ENCODE measurements at regions of chr14 and their contacts with region 1.

Region 1: DNA sequence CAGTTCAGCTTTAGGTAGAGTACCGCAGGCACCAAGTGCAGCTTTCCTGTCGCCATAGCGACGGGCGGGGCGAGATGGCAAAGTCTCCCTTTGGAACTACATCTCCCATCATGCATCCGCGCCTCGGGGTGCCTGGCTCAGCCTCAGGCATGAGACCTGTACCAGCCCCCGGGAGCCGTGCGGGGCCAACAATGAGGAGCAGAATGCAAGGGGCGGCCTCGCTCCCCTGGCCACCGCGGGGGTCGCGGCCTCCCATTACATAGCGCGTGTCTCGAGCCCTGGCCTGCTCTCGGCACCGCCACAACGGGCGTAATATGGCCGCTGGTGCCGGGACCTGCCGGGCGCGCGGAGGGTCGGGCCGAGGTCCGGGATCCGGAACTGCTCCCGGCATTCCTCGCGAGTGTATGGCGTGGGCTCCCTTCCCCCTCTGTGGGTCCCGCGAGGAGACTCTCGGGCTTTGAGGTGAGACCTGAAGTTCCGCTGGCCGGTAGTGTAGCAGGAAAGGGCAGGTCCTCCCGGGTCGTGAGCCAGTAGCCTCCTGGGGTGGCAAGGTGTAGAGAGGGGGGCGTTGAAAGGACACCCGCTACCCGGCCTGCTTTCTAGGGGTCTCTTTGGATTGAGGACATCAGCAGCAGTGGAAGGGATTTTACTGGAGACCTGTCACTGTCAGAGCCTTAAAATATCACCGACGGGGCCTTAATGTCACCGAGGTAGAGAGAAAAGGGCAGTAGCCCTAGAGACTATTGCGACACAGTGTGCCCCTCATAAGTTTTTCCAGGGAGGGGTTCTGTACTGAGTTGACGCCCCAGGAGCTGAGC is at the start of gene THTPA:
- DNase-seq: peak; percentile 98
- ATAC-seq: peak; percentile 62
- H3K4me3 Mint-ChIP-seq: peak within 1 kb of the TSS; percentile 86
- H3K27ac Mint-ChIP-seq: peak within 1 kb of the TSS; percentile 82
- H3K4me1 Mint-ChIP-seq: peaks cover 41% of the 10 kb centered on the region
- H3K27me3 Mint-ChIP-seq: no peaks in the 10 kb centered on the region; the same call in 1 of the 2 replicates
- CTCF ChIP-seq: no peak
- total RNA-seq, gene THTPA: 20.0 to 26.2 TPM (median 25.4 TPM) in 3 replicates

Region 2: DNA sequence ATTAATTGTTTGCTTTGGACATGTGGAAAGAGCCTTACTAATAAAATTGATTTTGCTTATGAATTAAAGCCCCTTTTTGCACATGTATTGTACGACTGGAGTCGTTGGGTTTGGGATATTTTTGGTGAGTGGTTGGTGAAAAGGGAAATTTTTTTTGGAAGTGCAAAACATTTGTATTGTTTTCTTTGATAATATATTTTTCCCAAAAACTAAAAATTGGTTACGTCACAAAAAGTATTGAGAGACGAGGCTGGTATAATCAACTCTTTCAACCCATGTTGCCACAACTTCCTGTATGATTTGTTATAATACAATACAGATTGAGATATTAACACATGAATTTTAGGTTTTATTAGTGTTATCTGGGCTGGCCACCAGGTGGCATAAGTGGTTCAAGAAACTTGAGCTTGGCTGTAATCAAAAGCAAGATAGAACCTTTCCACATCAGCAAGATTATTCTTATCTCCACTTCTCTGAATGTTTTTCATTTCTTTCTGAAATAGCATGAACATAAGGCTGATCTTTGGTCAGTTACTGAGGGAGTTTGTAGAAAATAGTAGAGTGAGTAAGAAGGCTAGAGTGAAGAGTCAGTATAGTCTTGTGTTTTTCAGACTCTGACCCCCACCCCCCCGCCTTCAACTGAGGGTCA is 77.9 kb before region 1 on chr14:
- CTCF ChIA-PET with region 1: interaction called, 377 read pairs
- POLR2A ChIA-PET with region 1: interaction called, 9 read pairs
- DNase-seq: peak; percentile 49
- ATAC-seq: no peak
- H3K4me3 Mint-ChIP-seq: no peak overlapping the region
- H3K27ac Mint-ChIP-seq: no peak overlapping the region
- H3K4me1 Mint-ChIP-seq: peaks cover 24% of the 10 kb centered on the region
- H3K27me3 Mint-ChIP-seq: no peaks in the 10 kb centered on the region
- CTCF ChIP-seq: peak; percentile 59

Region 3: GRCh38 chr14:23494223-23494622 is 61.9 kb before region 1 on chr14:
- CTCF ChIA-PET with region 1: interaction called, 22 read pairs
- POLR2A ChIA-PET with region 1: interaction called, 4 read pairs
- DNase-seq: peak; percentile 44
- ATAC-seq: peak; percentile 99
- H3K4me3 Mint-ChIP-seq: peak overlapping the region; percentile 37; the same call in 1 of the 2 replicates
- H3K27ac Mint-ChIP-seq: peak overlapping the region; percentile 95
- H3K4me1 Mint-ChIP-seq: peaks cover 30% of the 10 kb centered on the region
- H3K27me3 Mint-ChIP-seq: no peaks in the 10 kb centered on the region
- CTCF ChIP-seq: no peak

Region 4: DNA sequence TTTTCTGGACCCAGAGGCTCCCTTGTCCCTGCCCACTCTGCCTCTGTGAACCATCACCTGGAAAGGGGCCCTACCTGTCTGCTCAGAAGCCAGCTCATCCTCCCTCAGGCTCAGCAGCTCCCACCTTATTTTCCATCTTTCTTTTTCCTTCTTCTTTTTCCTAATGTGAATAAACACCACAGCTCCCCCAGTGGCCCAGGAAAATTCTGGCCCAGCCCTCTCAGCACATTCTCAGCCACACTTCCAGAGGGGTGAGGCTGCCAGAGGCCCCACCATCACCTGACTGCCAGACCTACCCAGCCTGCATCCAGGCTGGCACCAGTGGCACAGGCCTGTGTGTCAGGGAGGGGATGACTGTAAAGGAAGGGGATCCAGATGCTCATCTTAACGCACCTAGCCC is 27.5 kb before region 1 on chr14:
- CTCF ChIA-PET with region 1: interaction called, 44 read pairs
- POLR2A ChIA-PET with region 1: interaction called, 3 read pairs
- DNase-seq: peak; percentile 52
- ATAC-seq: peak; percentile 77
- H3K4me3 Mint-ChIP-seq: no peak overlapping the region
- H3K27ac Mint-ChIP-seq: peak overlapping the region; percentile 75
- H3K4me1 Mint-ChIP-seq: peaks cover 50% of the 10 kb centered on the region
- H3K27me3 Mint-ChIP-seq: no peaks in the 10 kb centered on the region; the same call in 1 of the 2 replicates
- CTCF ChIP-seq: no peak

Region 5: GRCh38 chr14:23544511-23545447 is 11.3 kb before region 1 on chr14:
- CTCF ChIA-PET with region 1: interaction called, 101 read pairs
- POLR2A ChIA-PET with region 1: interaction called, 102 read pairs
- DNase-seq: peak; percentile 86
- ATAC-seq: peak; percentile 59
- H3K4me3 Mint-ChIP-seq: peak overlapping the region; percentile 57
- H3K27ac Mint-ChIP-seq: no peak overlapping the region; the same call in none of the 2 replicates
- H3K4me1 Mint-ChIP-seq: peaks cover 22% of the 10 kb centered on the region
- H3K27me3 Mint-ChIP-seq: no peaks in the 10 kb centered on the region
- CTCF ChIP-seq: no peak

Region 6: DNA sequence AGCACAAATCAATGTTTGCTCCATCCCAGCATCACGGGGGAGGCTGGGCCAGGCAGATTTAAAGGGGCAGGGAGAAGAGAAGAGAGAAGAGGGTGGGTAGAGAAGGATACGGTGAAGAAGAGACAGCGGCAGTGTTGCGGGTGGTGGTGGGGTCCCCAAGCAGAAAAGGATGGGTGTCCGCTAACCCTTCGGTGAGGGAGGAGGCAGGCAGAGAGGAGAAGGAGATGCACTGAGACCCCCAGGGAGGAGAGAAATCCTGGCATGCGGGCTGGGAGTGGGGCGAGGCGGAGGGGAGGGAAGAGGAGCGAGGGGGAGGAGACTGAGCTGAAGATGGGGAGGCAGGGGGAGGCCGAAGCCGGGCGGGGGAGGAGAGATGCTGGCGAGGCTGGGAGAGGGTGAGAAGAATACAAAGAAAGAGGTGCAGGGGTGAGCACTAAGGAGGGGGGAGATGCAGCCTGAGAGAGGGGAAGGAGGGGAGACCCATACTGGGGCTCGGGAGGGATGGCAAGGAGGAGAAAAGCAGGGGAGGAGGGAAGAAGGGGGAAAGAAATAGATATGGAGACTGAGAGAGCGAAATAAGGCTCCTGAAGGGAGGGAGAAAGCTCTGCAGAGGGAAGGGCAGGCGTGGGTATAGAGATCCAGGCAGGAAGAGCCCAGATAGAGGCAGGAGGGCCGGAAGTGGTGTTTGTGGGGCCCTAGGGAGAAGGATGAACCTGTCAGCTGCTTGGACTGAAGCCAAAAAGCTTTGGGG is 22.6 kb after region 1 on chr14 and contains the start of gene JPH4:
- CTCF ChIA-PET with region 1: interaction called, 10 read pairs
- POLR2A ChIA-PET with region 1: interaction called, 3 read pairs
- DNase-seq: peak; percentile 69
- ATAC-seq: peak; percentile 30
- H3K4me3 Mint-ChIP-seq: peak within 1 kb of the TSS; percentile 73
- H3K27ac Mint-ChIP-seq: peak within 1 kb of the TSS; percentile 60; the same call in 1 of the 2 replicates
- H3K4me1 Mint-ChIP-seq: peaks cover 23% of the 10 kb centered on the region
- H3K27me3 Mint-ChIP-seq: peaks cover 36% of the 10 kb centered on the region
- CTCF ChIP-seq: no peak
- total RNA-seq, gene JPH4: 50.1 to 62.0 TPM (median 60.0 TPM) in 3 replicates

Region 7: DNA sequence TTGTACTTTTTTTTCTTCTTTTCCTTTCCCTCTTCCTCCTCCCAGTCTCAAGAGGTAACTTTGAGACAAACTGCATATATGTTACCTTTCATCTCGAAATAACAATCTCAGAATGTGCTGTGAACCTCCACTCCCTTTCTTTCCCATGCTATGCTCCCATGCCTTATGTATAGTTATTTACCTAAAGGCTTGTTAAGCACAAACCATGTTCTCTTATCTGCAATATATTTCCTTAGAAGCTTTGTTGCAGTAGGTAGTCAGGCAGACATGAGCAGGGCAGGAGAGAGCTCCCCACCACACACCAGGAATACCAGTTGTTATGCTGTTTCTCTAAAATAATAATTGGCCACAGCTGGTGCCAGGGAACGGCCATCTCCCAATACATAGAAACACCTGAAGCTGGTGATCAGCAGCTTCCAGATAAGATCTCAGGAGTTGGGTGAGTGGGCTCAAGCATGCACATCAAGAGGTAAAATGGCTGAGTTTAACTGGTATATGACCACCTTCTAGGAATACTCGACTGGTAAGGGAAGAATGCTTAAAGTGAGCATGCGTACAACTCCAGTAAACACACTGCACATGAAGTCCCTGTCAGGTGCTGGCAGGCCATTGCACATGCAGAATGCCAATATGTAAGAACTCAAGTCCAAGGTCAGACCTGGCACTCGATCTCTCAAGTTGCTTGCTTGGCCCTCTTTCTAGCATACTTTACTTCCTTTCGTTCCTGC is 65.3 kb after region 1 on chr14:
- CTCF ChIA-PET with region 1: no interaction called
- POLR2A ChIA-PET with region 1: no interaction called
- DNase-seq: no peak
- ATAC-seq: no peak
- H3K4me3 Mint-ChIP-seq: no peak overlapping the region
- H3K27ac Mint-ChIP-seq: no peak overlapping the region
- H3K4me1 Mint-ChIP-seq: no peaks in the 10 kb centered on the region
- H3K27me3 Mint-ChIP-seq: peaks cover 40% of the 10 kb centered on the region
- CTCF ChIP-seq: no peak

Region 8: GRCh38 chr14:23640524-23641141 is 84.5 kb after region 1 on chr14:
- CTCF ChIA-PET with region 1: no interaction called
- POLR2A ChIA-PET with region 1: no interaction called
- DNase-seq: peak; percentile 29
- ATAC-seq: peak; percentile 87
- H3K4me3 Mint-ChIP-seq: no peak overlapping the region
- H3K27ac Mint-ChIP-seq: no peak overlapping the region
- H3K4me1 Mint-ChIP-seq: 0 out of 2 replicates have a peak, but pooled peaks cover 2% of the 10 kb centered on the region
- H3K27me3 Mint-ChIP-seq: no peaks in the 10 kb centered on the region; the same call in 1 of the 2 replicates
- CTCF ChIP-seq: no peak